ENCODE measurements at regions of chr3 and their contacts with region 1.

Region 1: DNA sequence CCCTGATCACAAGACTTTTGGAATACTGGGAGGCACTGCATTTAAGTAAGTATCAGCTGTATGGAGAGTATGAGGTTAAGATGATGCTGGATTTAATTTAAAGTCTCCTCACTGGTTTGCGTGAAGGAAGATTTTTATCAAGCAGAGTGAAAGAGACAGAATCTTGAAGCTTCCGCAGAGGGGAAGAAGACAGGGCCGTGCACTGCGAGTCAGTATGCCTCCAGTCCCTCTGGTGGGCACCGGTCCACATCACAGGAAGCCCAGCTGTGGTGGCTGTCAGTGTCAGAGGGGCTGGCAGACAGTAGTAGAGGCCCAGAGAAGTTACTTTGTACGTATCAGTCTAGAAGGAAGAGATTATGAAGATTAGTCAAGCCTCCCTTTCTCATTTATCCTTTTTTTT is 379.0 kb upstream of the TPRG1 start:
- DNase-seq: no peak
- H3K4me3 Mint-ChIP-seq: no peak overlapping the region
- H3K27ac Mint-ChIP-seq: no peak overlapping the region
- H3K4me1 Mint-ChIP-seq: peaks cover 3% of the 10 kb centered on the region
- H3K27me3 Mint-ChIP-seq: no peaks in the 10 kb centered on the region

Region 2: DNA sequence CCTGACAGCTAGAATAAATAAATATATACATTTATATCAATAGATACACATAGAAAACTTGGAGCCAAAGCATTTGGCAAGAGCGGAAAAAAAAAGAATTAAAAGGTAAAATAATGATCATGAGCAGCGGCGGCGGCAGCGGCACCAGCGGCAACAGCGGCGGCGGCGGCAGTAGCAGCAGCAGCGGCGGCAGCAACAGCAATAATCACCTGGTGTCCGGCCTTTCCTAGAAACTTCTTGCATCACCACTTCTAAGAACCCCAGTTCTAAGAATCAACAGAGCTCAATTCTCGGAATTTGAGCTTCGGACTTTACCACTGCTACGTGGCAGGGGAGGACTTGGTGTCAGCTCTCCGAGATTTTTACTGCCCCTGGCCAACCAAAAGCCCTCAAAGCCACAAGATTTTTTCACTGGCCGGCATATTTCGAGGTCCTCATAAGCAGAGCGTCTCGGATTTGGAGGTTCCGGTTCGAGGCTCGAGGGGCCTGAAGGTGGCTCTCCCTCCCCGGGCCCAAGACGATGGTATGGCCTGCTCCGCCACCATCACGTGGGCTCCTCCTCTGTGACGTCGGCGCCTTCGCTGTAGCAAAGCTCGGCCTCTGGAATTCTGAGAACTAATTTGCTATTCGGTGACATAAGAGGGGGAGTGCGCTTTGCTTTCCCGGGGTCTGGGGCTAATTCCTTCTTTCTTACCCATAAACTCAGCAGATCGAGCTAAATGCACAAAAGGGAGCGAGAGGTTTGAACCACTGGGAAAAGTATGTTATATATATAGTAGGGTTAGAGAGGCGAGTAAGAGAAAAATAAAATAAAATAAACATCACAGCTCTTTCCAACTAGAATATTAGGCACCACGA is 1047.4 kb before region 1 on chr3 and contains the start of gene BCL6:
- CTCF ChIA-PET with region 1: interaction called, 10 read pairs
- intact Hi-C with region 1: loop called (anchors 1 kb)
- DNase-seq: peak; percentile 92
- H3K4me3 Mint-ChIP-seq: peak within 1 kb of the TSS; percentile 86
- H3K27ac Mint-ChIP-seq: peak within 1 kb of the TSS; percentile 97
- H3K4me1 Mint-ChIP-seq: peaks cover 46% of the 10 kb centered on the region
- H3K27me3 Mint-ChIP-seq: no peaks in the 10 kb centered on the region
- total RNA-seq, gene BCL6: 98.9 to 101 TPM

Region 3: GRCh38 chr3:188170461-188171459 is 622.0 kb before region 1 on chr3:
- CTCF ChIA-PET with region 1: no interaction called
- intact Hi-C with region 1: loop called (anchors 1 kb)
- DNase-seq: peak; percentile 89
- H3K4me3 Mint-ChIP-seq: peak overlapping the region; percentile 39
- H3K27ac Mint-ChIP-seq: peak overlapping the region; percentile 86
- H3K4me1 Mint-ChIP-seq: peaks cover 64% of the 10 kb centered on the region
- H3K27me3 Mint-ChIP-seq: no peaks in the 10 kb centered on the region

Region 4: DNA sequence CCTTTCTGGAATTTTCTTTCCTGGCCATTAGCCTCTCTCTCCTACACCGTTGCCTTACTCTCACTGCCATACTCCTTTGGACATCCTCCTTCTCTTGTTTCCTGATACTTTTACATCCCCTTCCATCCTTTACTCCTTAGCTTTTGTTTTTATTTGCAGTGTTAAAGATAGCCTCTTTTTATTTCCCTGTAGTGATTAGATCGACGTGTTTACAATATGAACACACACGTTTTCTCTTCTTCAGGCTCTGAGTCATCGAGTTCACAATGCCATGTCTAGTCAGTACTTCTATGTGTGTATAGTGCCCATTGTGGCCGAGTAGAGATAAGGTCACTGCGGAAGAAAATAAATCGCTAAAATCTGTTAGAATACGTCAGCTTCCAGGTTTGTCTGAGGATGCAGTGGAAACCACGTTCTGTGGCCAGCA is 430.4 kb before region 1 on chr3:
- CTCF ChIA-PET with region 1: no interaction called
- intact Hi-C with region 1: loop called (anchors 1 kb)
- DNase-seq: no peak
- H3K4me3 Mint-ChIP-seq: no peak overlapping the region
- H3K27ac Mint-ChIP-seq: no peak overlapping the region
- H3K4me1 Mint-ChIP-seq: peaks cover 40% of the 10 kb centered on the region
- H3K27me3 Mint-ChIP-seq: no peaks in the 10 kb centered on the region

Region 5: DNA sequence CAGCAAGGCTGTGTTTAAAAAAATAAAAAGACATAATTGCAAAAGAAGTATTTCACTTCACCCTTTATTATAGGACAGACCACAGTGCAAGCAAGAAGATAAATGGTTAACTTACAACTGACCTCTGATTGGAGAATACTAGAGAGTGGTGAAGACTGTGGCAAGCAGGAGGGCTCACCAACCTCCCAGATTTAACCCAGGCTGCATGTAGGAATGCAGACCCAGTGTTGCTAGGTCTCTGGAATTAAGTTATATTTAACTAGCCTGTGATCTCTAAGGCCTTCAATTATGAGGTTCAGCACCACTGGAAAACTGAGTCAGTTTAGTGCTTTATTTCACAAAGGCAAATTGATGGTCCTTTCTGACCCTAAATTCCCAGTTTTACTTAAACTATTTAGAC is 202.2 kb before region 1 on chr3:
- CTCF ChIA-PET with region 1: no interaction called
- intact Hi-C with region 1: no loop called
- DNase-seq: no peak
- H3K4me3 Mint-ChIP-seq: no peak overlapping the region
- H3K27ac Mint-ChIP-seq: no peak overlapping the region
- H3K4me1 Mint-ChIP-seq: no peaks in the 10 kb centered on the region
- H3K27me3 Mint-ChIP-seq: no peaks in the 10 kb centered on the region

Region 6: GRCh38 chr3:188683032-188683521 is 109.7 kb before region 1 on chr3:
- CTCF ChIA-PET with region 1: no interaction called
- intact Hi-C with region 1: loop called (anchors 1 kb)
- DNase-seq: peak; percentile 51
- H3K4me3 Mint-ChIP-seq: no peak overlapping the region
- H3K27ac Mint-ChIP-seq: peak overlapping the region; percentile 37
- H3K4me1 Mint-ChIP-seq: peaks cover 32% of the 10 kb centered on the region
- H3K27me3 Mint-ChIP-seq: no peaks in the 10 kb centered on the region

Region 7: DNA sequence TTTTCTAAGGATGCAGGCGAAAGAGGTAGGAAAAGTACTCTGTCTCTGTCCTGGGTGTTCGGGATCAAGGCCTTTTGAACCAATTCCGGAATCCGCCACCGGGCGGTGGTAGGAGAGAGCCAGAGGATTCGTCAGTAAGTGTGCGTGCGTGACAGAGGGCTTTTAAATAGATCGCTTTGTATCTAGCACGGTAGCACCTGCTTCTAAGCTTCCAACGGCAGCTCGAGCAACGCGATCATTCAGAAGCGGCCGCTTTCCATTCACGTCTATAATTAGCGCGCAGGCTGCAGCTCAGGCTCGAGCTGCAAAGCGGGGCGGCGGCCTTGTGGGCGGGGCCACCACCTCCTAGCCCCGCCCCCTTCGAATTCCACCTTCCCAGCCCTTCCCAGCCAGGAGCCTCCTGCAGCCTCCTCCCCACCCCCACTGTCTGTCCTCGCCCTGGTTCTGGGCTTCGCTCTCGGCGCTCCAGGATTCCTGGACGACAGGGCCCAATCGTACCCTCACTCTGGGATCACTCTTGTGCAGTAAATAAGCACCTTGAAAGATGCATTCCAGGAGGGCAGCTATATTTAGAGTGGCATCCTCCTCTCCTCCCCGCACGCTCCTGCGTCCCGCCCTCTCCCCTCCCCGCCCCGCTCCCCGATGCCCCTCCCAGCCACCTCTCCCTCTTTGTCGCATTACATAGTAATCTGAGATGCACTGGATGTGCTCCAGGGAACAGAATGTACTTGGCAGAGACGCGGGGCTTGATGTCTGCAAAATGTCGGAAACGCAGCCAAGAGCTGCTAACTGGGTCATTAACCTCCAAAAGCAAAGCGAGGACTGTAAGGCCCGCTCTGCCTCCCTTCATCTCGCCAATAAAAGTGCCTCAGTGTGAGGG is 154.8 kb after region 1 on chr3:
- CTCF ChIA-PET with region 1: no interaction called
- intact Hi-C with region 1: loop called (anchors 1 kb)
- DNase-seq: peak; percentile 61
- H3K4me3 Mint-ChIP-seq: no peak overlapping the region
- H3K27ac Mint-ChIP-seq: no peak overlapping the region
- H3K4me1 Mint-ChIP-seq: peaks cover 35% of the 10 kb centered on the region
- H3K27me3 Mint-ChIP-seq: peaks cover 18% of the 10 kb centered on the region

Region 8: DNA sequence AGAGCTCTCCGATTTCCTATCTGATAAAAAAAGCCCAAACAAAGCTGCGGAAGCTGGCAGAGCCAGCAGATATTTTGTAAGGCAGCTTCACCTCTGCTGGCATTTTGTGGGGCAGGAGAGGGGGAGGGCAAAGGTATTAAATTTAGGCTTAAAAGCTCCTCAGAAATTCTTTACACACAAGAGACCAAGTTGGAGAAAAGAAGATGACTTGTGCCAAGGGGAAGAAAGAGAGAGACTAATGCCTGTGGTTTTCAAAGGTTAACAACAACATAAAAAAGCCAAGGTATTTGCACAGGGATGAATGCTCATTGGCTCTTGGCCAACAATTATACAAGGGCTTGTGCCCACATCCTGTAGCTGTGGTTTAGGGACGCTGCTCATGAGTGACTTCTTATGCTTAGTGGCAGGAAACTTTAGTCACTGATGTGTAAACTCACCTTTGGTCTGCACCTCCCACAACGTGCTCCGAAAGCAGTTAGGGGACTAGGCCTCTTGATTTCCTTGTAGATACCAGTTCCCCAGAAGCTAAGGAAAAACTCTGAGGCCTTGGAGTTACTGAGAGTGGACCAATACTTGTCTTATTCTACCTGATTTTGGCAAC is 531.8 kb after region 1 on chr3:
- CTCF ChIA-PET with region 1: no interaction called
- intact Hi-C with region 1: loop called (anchors 10 kb)
- DNase-seq: peak; percentile 95
- H3K4me3 Mint-ChIP-seq: peak overlapping the region; percentile 36
- H3K27ac Mint-ChIP-seq: peak overlapping the region; percentile 88
- H3K4me1 Mint-ChIP-seq: peaks cover 56% of the 10 kb centered on the region
- H3K27me3 Mint-ChIP-seq: no peaks in the 10 kb centered on the region